CD8-positive, alpha-beta T cell (primary cell): ENCODE measurements at regions of chr2 and their contacts with region 1.

Region 1: GRCh38 chr2:197705121-197705911 is at the start of gene MARS2:
- DNase-seq: peak; percentile 86 to 97 (median 93)
- ATAC-seq: peak; percentile 83
- H3K4me3 ChIP-seq: peak within 1 kb of the TSS; percentile 79 to 99
- H3K4me3 Mint-ChIP-seq: peak within 1 kb of the TSS; percentile 87
- H3K27ac ChIP-seq: peak within 1 kb of the TSS; percentile 82 to 88
- H3K27ac Mint-ChIP-seq: peak within 1 kb of the TSS; percentile 94
- H3K4me1 ChIP-seq: peaks cover 42% of the 10 kb centered on the region
- H3K4me1 Mint-ChIP-seq: peaks cover 40% of the 10 kb centered on the region
- H3K27me3 ChIP-seq: no peaks in the 10 kb centered on the region
- H3K27me3 Mint-ChIP-seq: peaks cover 4% of the 10 kb centered on the region
- CTCF ChIP-seq: no peak
- total RNA-seq, gene MARS2: 8.4 to 9.2 TPM

Region 2: DNA sequence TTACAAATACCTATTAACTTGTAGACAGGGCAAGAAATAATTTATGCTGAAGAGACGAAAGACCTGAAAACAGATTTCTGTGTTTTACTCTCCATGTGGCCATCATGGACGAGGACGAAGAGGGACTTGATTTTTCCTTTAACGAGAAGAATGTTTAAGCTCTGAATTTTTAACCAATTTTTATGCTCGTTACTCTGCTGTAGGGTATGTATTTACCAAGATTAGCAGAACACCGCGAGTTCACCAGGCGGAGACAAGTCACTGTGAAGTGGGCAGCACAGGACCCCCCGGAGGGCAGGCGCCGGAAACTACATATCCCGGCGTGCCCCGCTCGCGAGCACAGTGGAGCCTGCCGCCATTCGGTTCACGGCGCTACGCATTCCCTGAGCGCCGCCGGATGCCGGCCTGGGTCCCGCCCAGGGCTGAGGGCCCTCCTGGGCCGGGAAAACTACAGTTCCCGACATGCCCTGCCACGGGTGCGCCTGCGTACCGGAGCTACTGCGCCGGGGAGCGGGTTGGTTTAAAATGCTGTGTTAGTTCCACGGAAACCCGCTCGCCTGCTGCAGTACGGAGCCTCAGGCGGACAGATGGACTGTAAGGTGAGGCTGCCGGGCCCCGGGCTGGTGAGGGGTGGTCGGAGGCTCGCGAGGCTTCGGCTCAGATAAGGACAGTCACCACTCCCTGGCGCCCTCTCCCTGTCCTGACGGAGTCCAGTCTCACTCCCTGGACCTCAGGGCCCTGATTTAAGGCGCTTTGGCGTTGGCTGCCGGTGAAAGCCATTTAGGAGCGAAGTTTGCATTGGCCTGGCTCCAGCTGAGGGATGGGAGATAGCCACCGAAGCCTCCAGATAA is 1065.9 kb before region 1 on chr2 and contains the start of gene CCDC150:
- CTCF ChIA-PET with region 1: no interaction called
- POLR2A ChIA-PET with region 1: no interaction called
- intact Hi-C with region 1: loop called (anchors 2 to 5 kb)
- DNase-seq: peak; percentile 89 to 96 (median 94)
- ATAC-seq: peak; percentile 100
- H3K4me3 ChIP-seq: peak within 1 kb of the TSS; percentile 68 to 85
- H3K4me3 Mint-ChIP-seq: peak within 1 kb of the TSS; percentile 86
- H3K27ac ChIP-seq: peak within 1 kb of the TSS; percentile 12 to 27
- H3K27ac Mint-ChIP-seq: peak within 1 kb of the TSS; percentile 38
- H3K4me1 ChIP-seq: peaks cover 7% of the 10 kb centered on the region
- H3K4me1 Mint-ChIP-seq: peaks cover 13% of the 10 kb centered on the region
- H3K27me3 ChIP-seq: no peaks in the 10 kb centered on the region
- H3K27me3 Mint-ChIP-seq: no peaks in the 10 kb centered on the region
- CTCF ChIP-seq: no peak
- total RNA-seq, gene CCDC150: 0.72 to 0.81 TPM

Region 3: GRCh38 chr2:197434541-197435513 is 270.5 kb before region 1 on chr2 and contains the start of gene SF3B1:
- CTCF ChIA-PET with region 1: no interaction called
- POLR2A ChIA-PET with region 1: interaction called, 3 read pairs
- intact Hi-C with region 1: loop called (anchors 1 to 2 kb)
- DNase-seq: peak; percentile 98 to 100 (median 99)
- ATAC-seq: peak; percentile 96
- H3K4me3 ChIP-seq: peak within 1 kb of the TSS; percentile 95 to 99
- H3K4me3 Mint-ChIP-seq: peak within 1 kb of the TSS; percentile 100
- H3K27ac ChIP-seq: peak within 1 kb of the TSS; percentile 98 to 99
- H3K27ac Mint-ChIP-seq: peak within 1 kb of the TSS; percentile 100
- H3K4me1 ChIP-seq: peaks cover 43% of the 10 kb centered on the region
- H3K4me1 Mint-ChIP-seq: peaks cover 53% of the 10 kb centered on the region
- H3K27me3 ChIP-seq: no peaks in the 10 kb centered on the region
- H3K27me3 Mint-ChIP-seq: no peaks in the 10 kb centered on the region
- CTCF ChIP-seq: no peak
- total RNA-seq, gene SF3B1: 525 to 526 TPM

Region 4: DNA sequence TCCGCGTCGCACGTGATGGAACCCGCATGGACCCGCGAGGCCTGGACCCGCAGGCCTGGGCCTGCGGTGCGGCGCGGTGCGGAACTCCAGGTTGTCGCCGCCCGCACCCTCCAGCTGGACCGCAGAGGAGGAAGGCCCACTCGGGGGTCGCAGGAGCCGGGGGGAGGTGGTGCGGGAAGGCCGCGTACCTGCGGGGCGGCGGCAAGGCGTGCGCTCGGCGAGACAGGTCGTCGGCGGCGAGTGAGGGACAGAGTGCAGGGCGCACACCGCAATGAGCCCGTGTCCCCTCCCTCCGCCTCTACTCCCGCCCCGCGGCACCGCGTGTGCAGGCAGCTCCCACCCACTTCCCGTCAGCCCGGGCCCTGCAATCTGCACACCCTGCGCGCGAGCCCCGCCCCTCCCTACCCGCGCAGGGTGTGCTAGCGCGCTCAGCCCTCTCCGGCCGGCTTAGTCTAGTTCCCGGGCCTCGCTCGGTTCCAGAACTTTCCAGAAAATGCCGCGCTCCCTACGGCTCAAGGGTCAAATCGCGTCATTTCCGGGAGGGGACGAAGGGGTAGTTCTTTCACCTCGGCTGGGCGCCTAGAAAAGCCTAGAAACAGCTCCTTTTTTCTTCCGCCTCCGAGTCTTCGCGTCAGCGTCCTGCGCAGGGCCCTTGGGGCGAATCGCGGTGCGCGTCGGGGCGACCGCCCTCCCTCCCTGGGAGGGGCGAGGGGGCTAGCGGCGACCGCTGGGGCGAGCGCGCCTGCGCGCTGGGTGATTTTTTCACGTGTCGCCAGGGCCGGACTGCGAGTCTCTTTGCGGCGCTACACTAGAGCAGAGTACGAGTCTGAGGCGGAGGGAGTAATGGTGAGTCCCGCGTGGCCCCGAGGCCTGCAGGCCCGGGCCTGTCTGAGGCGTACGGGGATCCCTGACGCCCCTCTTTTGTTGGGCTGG is 205.5 kb before region 1 on chr2 and contains the starts of genes HSPD1 and HSPE1:
- CTCF ChIA-PET with region 1: no interaction called
- POLR2A ChIA-PET with region 1: interaction called, 6 read pairs
- intact Hi-C with region 1: loop called (anchors 1 to 5 kb)
- DNase-seq: peak; percentile 93 to 99 (median 97)
- ATAC-seq: peak; percentile 86
- H3K4me3 ChIP-seq: peak within 1 kb of the TSS; percentile 61 to 76
- H3K4me3 Mint-ChIP-seq: peak within 1 kb of the TSS; percentile 92
- H3K27ac ChIP-seq: peak within 1 kb of the TSS; percentile 96
- H3K27ac Mint-ChIP-seq: peak within 1 kb of the TSS; percentile 97
- H3K4me1 ChIP-seq: peaks cover 55% of the 10 kb centered on the region
- H3K4me1 Mint-ChIP-seq: peaks cover 62% of the 10 kb centered on the region
- H3K27me3 ChIP-seq: no peaks in the 10 kb centered on the region
- H3K27me3 Mint-ChIP-seq: no peaks in the 10 kb centered on the region
- CTCF ChIP-seq: no peak
- total RNA-seq, gene HSPD1: 162 to 163 TPM
- total RNA-seq, gene HSPE1: 76.7 to 76.8 TPM

Region 5: DNA sequence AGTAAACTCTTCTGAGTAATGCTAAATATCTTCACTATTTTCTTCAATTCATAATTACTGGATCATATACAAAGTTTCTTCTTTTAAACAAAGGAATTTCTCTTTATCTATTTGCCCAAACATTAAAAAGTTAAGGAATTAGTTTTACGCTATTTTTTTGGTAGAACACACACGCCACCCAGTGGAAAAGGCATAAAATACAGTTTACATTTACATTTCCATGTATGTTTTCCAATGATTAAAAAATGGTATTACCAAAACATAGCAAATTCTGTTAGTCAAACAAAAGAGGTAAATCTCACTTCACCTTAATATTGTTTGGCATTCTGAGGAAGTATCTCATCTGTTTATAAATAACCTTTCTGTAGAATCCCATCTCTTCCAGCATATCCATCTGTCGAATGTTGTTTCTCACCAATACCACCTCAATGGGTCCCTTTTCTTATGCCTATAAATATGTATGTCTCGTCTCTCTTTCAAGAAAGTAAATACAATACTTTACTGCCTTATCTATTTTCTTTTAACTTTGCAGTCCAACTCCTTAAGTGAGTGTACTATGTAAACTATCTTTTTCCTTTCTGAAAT is 72.6 kb after region 1 on chr2:
- CTCF ChIA-PET with region 1: interaction called, 21 read pairs
- POLR2A ChIA-PET with region 1: interaction called, 3 read pairs
- intact Hi-C with region 1: loop called (anchors 1 to 2 kb)
- DNase-seq: peak in 3 of 9 experiments; percentile 38 to 58 (median 48)
- ATAC-seq: no peak
- H3K4me3 ChIP-seq: no peak overlapping the region
- H3K4me3 Mint-ChIP-seq: no peak overlapping the region
- H3K27ac ChIP-seq: no peak overlapping the region
- H3K27ac Mint-ChIP-seq: no peak overlapping the region
- H3K4me1 ChIP-seq: no peaks in the 10 kb centered on the region
- H3K4me1 Mint-ChIP-seq: no peaks in the 10 kb centered on the region
- H3K27me3 ChIP-seq: no peaks in the 10 kb centered on the region
- H3K27me3 Mint-ChIP-seq: no peaks in the 10 kb centered on the region
- CTCF ChIP-seq: peak; percentile 97

Region 6: GRCh38 chr2:197873293-197873701 is 168.0 kb after region 1 on chr2:
- CTCF ChIA-PET with region 1: no interaction called
- POLR2A ChIA-PET with region 1: no interaction called
- intact Hi-C with region 1: loop called in 1 of 2 experiments (anchors 5 kb)
- DNase-seq: no peak
- ATAC-seq: no peak
- H3K4me3 ChIP-seq: no peak overlapping the region
- H3K4me3 Mint-ChIP-seq: no peak overlapping the region
- H3K27ac ChIP-seq: no peak overlapping the region
- H3K27ac Mint-ChIP-seq: no peak overlapping the region
- H3K4me1 ChIP-seq: peaks cover 22% of the 10 kb centered on the region
- H3K4me1 Mint-ChIP-seq: peaks cover 40% of the 10 kb centered on the region
- H3K27me3 ChIP-seq: no peaks in the 10 kb centered on the region
- H3K27me3 Mint-ChIP-seq: no peaks in the 10 kb centered on the region
- CTCF ChIP-seq: no peak

Region 7: GRCh38 chr2:198296665-198297308 is 591.5 kb after region 1 on chr2:
- CTCF ChIA-PET with region 1: no interaction called
- POLR2A ChIA-PET with region 1: no interaction called
- intact Hi-C with region 1: loop called (anchors 1 to 2 kb)
- DNase-seq: peak; percentile 10 to 72 (median 60)
- ATAC-seq: peak; percentile 79
- H3K4me3 ChIP-seq: no peak overlapping the region
- H3K4me3 Mint-ChIP-seq: no peak overlapping the region
- H3K27ac ChIP-seq: no peak overlapping the region
- H3K27ac Mint-ChIP-seq: no peak overlapping the region
- H3K4me1 ChIP-seq: no peaks in the 10 kb centered on the region
- H3K4me1 Mint-ChIP-seq: peaks cover 2% of the 10 kb centered on the region
- H3K27me3 ChIP-seq: no peaks in the 10 kb centered on the region
- H3K27me3 Mint-ChIP-seq: peaks cover 29% of the 10 kb centered on the region
- CTCF ChIP-seq: peak; percentile 84